Activated T-helper 2 cell treated with anti-CD3 and anti-CD28 coated beads, Interferon-gamma antibody, Interleukin-2, Interleukin-4, amounts not matched to agents 10 μg/mL and 5 μg/mL and 100 μg/mL, durations not matched to agents 14 hours and 24 hours and 36 hours (primary cell): ENCODE measurements at regions of chr11 and their contacts with region 1.

Region 1: GRCh38 chr11:9573052-9573774 is at the start of gene WEE1:
- DNase-seq: peak; percentile 98
- H3K4me3 Mint-ChIP-seq: peak within 1 kb of the TSS; percentile 91
- H3K27ac Mint-ChIP-seq: peak within 1 kb of the TSS; percentile 89
- H3K4me1 Mint-ChIP-seq: peaks cover 36% of the 10 kb centered on the region
- H3K27me3 Mint-ChIP-seq: peaks cover 2% of the 10 kb centered on the region
- total RNA-seq, gene WEE1: 48.6 and 49.6 TPM in 2 replicates

Region 2: GRCh38 chr11:9396752-9397151 is 176.5 kb before region 1 on chr11:
- intact Hi-C with region 1: loop called (anchors 10 kb)
- DNase-seq: no peak
- H3K4me3 Mint-ChIP-seq: no peak overlapping the region
- H3K27ac Mint-ChIP-seq: peak overlapping the region; percentile 74
- H3K4me1 Mint-ChIP-seq: peaks cover 48% of the 10 kb centered on the region
- H3K27me3 Mint-ChIP-seq: no peaks in the 10 kb centered on the region

Region 3: GRCh38 chr11:9601037-9601875 is 28.0 kb after region 1 on chr11:
- intact Hi-C with region 1: loop called (anchors 1 kb)
- DNase-seq: peak; percentile 72
- H3K4me3 Mint-ChIP-seq: peak overlapping the region; percentile 77
- H3K27ac Mint-ChIP-seq: peak overlapping the region; percentile 89
- H3K4me1 Mint-ChIP-seq: peaks cover 34% of the 10 kb centered on the region
- H3K27me3 Mint-ChIP-seq: no peaks in the 10 kb centered on the region

Region 4: GRCh38 chr11:9663699-9664275 is 90.6 kb after region 1 on chr11 and contains the start of gene SWAP70:
- intact Hi-C with region 1: loop called (anchors 1 kb)
- DNase-seq: peak; percentile 72
- H3K4me3 Mint-ChIP-seq: peak within 1 kb of the TSS; percentile 86
- H3K27ac Mint-ChIP-seq: no peak within 1 kb of the TSS
- H3K4me1 Mint-ChIP-seq: peaks cover 18% of the 10 kb centered on the region
- H3K27me3 Mint-ChIP-seq: peaks cover 37% of the 10 kb centered on the region
- total RNA-seq, gene SWAP70: 8.4 and 11.8 TPM in 2 replicates